Gastrocnemius medialis (tissue), 4 donors: ENCODE measurements at regions of chr16 and their contacts with region 1.

Region 1: DNA sequence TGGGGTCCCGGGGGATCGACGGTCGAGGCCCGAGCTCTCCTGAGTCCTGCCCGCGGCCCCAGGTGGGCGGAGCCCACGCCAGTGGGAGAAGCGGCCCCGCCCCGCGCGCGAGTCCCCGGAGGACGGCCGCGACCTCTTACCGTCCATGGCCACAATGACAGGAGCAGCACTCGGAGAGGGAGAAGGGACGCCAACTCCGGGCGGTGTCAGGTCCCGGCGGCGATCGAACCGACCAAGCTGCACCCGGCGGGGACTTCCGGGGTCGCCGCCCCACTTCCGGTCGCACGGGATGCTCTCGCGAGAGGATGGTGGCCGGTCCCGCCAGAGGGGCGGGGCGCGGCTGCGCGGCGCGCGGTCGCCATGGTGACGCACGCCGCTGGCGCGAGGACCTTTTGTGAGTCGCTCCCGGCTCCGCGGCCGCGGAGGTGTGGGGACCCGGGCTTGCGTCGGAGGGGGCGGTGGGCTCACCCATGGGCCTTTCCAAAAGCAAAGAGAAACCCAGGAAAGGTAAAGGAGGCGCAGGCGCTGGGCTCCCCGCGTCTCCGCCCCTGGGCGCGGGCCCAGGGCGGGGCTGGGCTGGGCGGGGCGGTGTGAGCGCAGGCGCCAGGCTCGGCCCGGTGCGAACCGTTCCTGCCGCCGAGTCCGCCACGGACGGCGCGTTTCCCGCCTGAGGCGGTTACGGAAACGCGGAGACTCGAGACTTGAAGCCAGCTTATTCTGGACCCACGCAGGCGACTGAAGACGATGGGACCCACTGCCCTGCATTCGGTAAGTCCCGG is at the starts of genes CHMP1A and SPATA33:
- DNase-seq: peak; percentile 70 to 84
- ATAC-seq: peak; percentile 98
- H3K4me3 ChIP-seq: peak within 1 kb of the TSS; percentile 96 to 100 (median 99)
- H3K27ac ChIP-seq: peak within 1 kb of the TSS; percentile 86 to 91 (median 89)
- H3K4me1 ChIP-seq: peaks cover 18 to 19% of the 10 kb centered on the region in 2 donors
- H3K27me3 ChIP-seq: no peaks in the 10 kb centered on the region
- CTCF ChIP-seq: no peak
- POLR2A ChIP-seq: peak; percentile 54 to 78
- total RNA-seq, gene CHMP1A: 53.4 to 105 (median 78.8) TPM
- total RNA-seq, gene SPATA33: 1.2 to 2.7 (median 2.1) TPM

Region 2: GRCh38 chr16:89410794-89411309 is 246.8 kb before region 1 on chr16:
- in situ Hi-C with region 1: no loop called
- intact Hi-C with region 1: no loop called
- DNase-seq: peak; percentile 34 to 53
- ATAC-seq: peak; percentile 28 to 51
- H3K4me3 ChIP-seq: no peak overlapping the region
- H3K27ac ChIP-seq: peak overlapping the region; percentile 9 to 82 (median 49)
- H3K4me1 ChIP-seq: peaks cover 85 to 94% of the 10 kb centered on the region in 2 donors
- H3K27me3 ChIP-seq: no peaks in the 10 kb centered on the region
- CTCF ChIP-seq: no peak
- POLR2A ChIP-seq: no peak

Region 3: GRCh38 chr16:89686520-89687091 is 29.0 kb after region 1 on chr16 and contains the start of gene CDK10:
- in situ Hi-C with region 1: no loop called
- intact Hi-C with region 1: loop called (anchors 1 kb)
- DNase-seq: peak; percentile 60 to 85
- ATAC-seq: peak; percentile 97
- H3K4me3 ChIP-seq: peak within 1 kb of the TSS; percentile 86 to 90 (median 88)
- H3K27ac ChIP-seq: peak within 1 kb of the TSS; percentile 73 to 92 (median 90)
- H3K4me1 ChIP-seq: peaks cover 11 to 19% of the 10 kb centered on the region in 2 donors
- H3K27me3 ChIP-seq: no peaks in the 10 kb centered on the region
- CTCF ChIP-seq: peak in 1 of 5 experiments; percentile 12
- POLR2A ChIP-seq: peak; percentile 50 to 69
- total RNA-seq, gene CDK10: 16.9 to 26.1 (median 19.7) TPM